Activated naive CD4-positive, alpha-beta T cell treated with anti-CD3 and anti-CD28 coated beads for 36 hours (primary cell): ENCODE measurements at regions of chr5 and their contacts with region 1.

Region 1: DNA sequence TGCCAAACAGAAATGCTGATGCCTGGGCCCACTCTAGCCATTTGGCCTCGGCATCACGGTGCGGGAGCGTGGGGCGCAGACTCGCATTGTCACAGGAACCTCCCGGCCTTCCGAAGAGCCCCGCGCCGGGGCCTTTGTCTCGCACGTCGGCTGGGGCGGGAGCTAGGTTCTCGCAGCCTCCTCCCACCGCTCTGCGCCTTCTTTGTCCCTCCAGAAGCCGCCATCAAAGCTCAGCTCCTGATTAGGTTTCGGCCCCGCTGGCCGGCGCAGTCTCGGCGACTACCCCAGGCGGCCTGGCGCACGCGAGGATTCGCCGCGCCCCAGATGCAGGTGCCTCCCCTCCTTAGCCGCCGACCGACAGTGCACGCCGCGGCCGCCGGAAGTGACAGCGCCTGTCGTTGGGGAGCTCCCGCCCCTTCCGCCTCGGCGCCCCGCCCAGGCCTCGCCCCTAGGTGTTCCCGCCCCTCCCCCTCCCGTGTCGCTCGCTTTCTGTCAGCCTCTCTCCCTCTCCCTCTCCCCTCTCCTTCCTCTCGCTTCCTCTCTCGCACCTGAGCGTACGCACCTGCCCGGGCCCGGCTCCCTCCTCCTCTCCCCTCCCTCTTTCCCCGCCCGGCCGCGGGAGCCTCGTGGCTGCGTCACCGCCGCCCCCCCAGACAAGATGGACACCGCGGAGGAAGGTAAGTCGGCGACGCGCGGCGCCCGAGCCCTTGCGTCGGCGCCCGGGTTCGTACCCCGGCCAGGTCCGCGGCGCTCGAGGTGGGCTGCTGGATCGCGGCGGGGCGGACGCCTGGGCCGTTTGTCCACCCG is at the start of gene MARCHF6:
- DNase-seq: peak; percentile 96
- H3K4me3 Mint-ChIP-seq: peak within 1 kb of the TSS; percentile 99
- H3K27ac Mint-ChIP-seq: peak within 1 kb of the TSS; percentile 98
- H3K4me1 Mint-ChIP-seq: peaks cover 39% of the 10 kb centered on the region
- H3K27me3 Mint-ChIP-seq: no peaks in the 10 kb centered on the region
- total RNA-seq, gene MARCHF6: 72.5 to 76.8 TPM

Region 2: DNA sequence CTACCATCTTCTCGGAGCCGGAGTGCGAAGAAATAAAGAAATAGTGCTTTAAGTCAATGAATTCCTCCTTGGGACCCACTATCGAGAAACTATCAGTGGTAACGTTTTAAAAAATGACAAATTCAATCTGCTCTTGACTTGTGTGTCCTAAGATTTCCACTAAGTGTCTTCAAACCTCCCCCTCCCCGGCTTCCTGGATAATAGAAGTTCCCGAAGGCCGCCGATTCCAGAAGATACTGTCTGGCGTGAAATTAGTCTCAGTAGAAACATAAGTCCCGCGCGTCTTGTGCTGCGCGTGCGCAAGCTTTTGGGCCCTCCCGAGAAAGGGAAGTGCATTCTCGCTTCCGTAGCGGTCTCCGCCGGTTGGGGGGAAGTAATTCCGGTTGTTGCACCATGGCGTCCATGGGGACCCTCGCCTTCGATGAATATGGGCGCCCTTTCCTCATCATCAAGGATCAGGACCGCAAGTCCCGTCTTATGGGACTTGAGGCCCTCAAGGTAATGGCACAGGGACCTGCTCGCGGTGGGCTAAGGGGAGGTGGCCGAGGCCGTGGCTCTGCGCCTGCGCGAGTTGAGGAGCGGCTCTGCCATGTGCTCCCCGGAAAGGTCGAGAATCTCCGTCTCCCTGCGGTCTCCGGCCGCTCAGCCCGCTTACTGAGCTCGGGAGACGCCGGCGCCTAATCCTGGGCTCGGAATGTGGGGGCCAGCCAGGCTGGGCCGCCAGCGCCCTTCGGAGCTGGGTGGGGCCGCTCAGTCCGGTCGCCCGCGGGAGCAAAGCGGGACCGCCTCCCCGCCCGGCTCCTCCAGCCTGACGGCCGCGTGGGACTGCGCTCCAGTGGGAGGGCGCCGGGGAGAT is 103.3 kb before region 1 on chr5 and contains the start of gene CCT5:
- CTCF ChIA-PET with region 1: interaction called, 4 read pairs
- intact Hi-C with region 1: loop called (anchors 1 kb)
- DNase-seq: peak; percentile 93
- H3K4me3 Mint-ChIP-seq: peak within 1 kb of the TSS; percentile 86
- H3K27ac Mint-ChIP-seq: peak within 1 kb of the TSS; percentile 99
- H3K4me1 Mint-ChIP-seq: peaks cover 47% of the 10 kb centered on the region
- H3K27me3 Mint-ChIP-seq: no peaks in the 10 kb centered on the region
- total RNA-seq, gene CCT5: 414 to 419 TPM

Region 3: GRCh38 chr5:10339058-10339811 is 14.2 kb before region 1 on chr5:
- CTCF ChIA-PET with region 1: no interaction called
- intact Hi-C with region 1: loop called (anchors 1 kb)
- DNase-seq: no peak
- H3K4me3 Mint-ChIP-seq: no peak overlapping the region
- H3K27ac Mint-ChIP-seq: no peak overlapping the region
- H3K4me1 Mint-ChIP-seq: no peaks in the 10 kb centered on the region
- H3K27me3 Mint-ChIP-seq: peaks cover 10% of the 10 kb centered on the region

Region 4: DNA sequence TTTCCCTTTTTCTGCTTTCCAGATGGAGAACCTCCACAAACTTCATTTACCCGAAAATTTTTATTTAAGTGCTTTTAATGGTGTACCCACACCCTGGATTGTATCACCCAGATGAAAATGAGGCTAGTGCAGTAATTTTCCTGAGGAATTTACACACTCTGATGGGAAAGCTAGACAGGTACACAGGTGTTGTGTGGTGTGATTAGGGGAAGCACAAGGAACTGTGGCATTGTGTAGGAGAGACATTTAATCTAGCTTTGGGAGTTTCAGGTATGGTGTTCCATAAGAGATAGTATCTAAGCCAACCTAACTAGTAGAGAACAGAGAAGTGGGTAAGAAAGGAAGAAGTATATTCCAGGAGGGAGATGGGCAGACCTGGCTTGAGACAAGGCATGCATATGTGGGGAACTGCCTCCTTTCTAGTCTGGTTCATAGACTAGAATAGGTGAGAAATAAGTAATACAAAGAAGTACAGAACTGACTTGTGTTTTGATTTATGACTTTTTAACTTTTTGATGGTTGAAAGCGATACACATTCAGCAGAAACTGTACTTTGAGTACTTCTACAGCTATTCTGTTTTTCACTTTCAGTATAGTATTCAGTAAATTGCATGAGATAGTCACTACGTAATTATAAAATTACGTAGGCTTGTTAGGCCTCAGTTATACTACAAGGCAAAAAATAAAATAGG is 65.4 kb after region 1 on chr5:
- CTCF ChIA-PET with region 1: interaction called, 8 read pairs
- intact Hi-C with region 1: loop called (anchors 1 kb)
- DNase-seq: peak; percentile 21
- H3K4me3 Mint-ChIP-seq: no peak overlapping the region
- H3K27ac Mint-ChIP-seq: no peak overlapping the region
- H3K4me1 Mint-ChIP-seq: peaks cover 52% of the 10 kb centered on the region
- H3K27me3 Mint-ChIP-seq: no peaks in the 10 kb centered on the region

Region 5: DNA sequence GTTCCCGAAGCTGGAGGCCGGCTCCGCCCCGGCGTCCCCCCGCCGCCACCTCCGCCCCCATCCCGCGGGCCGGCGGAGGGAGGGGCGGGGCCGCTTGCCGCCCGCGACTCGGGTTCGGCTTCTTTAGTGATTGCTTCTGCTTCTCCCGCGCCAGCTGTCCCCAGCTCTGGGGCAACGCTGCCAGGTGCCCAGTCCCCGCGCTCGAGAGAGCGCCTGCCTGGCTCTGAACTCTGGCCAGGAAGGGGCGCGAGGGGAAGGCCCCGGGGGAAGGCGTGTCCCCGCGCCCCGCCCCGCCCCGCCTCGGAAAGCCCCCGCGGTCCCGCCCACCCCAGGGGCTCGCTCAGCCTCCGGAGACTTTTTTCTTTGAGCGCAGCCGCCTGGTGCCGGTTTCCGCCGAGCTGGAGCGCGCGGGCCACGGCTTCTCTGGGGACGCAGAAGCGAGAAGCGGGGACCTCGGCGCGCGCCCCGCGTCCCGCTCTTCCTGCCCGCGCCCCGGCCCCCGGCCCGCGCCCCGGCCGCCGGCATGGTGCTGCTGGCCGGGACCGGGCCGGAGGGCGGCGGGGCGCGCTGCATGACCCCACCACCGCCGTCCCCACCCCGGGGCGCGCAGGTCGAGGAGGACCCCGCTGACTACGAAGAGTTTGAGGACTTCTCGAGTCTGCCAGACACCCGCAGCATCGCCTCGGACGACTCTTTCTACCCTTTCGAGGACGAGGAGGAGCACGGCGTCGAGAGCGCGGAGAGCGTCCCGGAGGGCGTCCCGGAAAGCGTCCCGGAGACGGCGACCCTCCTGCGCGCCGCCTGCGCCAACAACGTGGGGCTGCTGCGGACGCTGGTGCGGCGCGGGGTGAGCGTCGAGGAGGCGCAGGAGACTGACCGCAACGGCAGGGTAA is 210.7 kb after region 1 on chr5 and contains the start of gene ANKRD33B:
- CTCF ChIA-PET with region 1: no interaction called
- intact Hi-C with region 1: loop called (anchors 1 kb)
- DNase-seq: peak; percentile 85
- H3K4me3 Mint-ChIP-seq: peak within 1 kb of the TSS; percentile 84
- H3K27ac Mint-ChIP-seq: peak within 1 kb of the TSS; percentile 78
- H3K4me1 Mint-ChIP-seq: peaks cover 15% of the 10 kb centered on the region
- H3K27me3 Mint-ChIP-seq: peaks cover 20% of the 10 kb centered on the region
- total RNA-seq, gene ANKRD33B: 1.9 to 2.5 TPM

Region 6: GRCh38 chr5:10761166-10761932 is 407.9 kb after region 1 on chr5 and contains the start of gene DAP:
- CTCF ChIA-PET with region 1: no interaction called
- intact Hi-C with region 1: loop called (anchors 2 kb)
- DNase-seq: peak; percentile 78
- H3K4me3 Mint-ChIP-seq: peak within 1 kb of the TSS; percentile 84
- H3K27ac Mint-ChIP-seq: peak within 1 kb of the TSS; percentile 83
- H3K4me1 Mint-ChIP-seq: peaks cover 41% of the 10 kb centered on the region
- H3K27me3 Mint-ChIP-seq: peaks cover 3% of the 10 kb centered on the region
- total RNA-seq, gene DAP: 29.5 to 29.7 TPM